ENCODE measurements at regions of chr1 and their contacts with region 1.

Region 1: GRCh38 chr1:240189386-240189989 is 97.8 kb downstream of the FMN2 start:
- H3K4me3 ChIP-seq: no peak overlapping the region
- H3K27ac ChIP-seq: no peak overlapping the region
- H3K4me1 ChIP-seq: peaks cover 4% of the 10 kb centered on the region; the same call in 1 of the 2 replicates
- CTCF ChIP-seq: peak; percentile 61

Region 2: GRCh38 chr1:239951511-239952140 is 237.9 kb before region 1 on chr1:
- CTCF ChIA-PET with region 1: interaction called, 11 read pairs
- POLR2A ChIA-PET with region 1: no interaction called
- H3K4me3 ChIP-seq: no peak overlapping the region
- H3K27ac ChIP-seq: no peak overlapping the region
- H3K4me1 ChIP-seq: no peaks in the 10 kb centered on the region
- CTCF ChIP-seq: peak; percentile 64

Region 3: GRCh38 chr1:240027059-240027462 is 162.4 kb before region 1 on chr1:
- CTCF ChIA-PET with region 1: interaction called, 120 read pairs
- POLR2A ChIA-PET with region 1: no interaction called
- H3K4me3 ChIP-seq: no peak overlapping the region
- H3K27ac ChIP-seq: no peak overlapping the region
- H3K4me1 ChIP-seq: no peaks in the 10 kb centered on the region
- CTCF ChIP-seq: peak; percentile 78; the same call in 1 of the 2 replicates

Region 4: GRCh38 chr1:240169188-240169587 is 20.3 kb before region 1 on chr1:
- CTCF ChIA-PET with region 1: interaction called, 16 read pairs
- POLR2A ChIA-PET with region 1: no interaction called
- H3K4me3 ChIP-seq: no peak overlapping the region
- H3K27ac ChIP-seq: no peak overlapping the region
- H3K4me1 ChIP-seq: peaks cover 5% of the 10 kb centered on the region; the same call in 1 of the 2 replicates
- CTCF ChIP-seq: peak; percentile 39; the same call in 1 of the 2 replicates

Region 5: GRCh38 chr1:240608707-240609106 is 419.2 kb after region 1 on chr1:
- CTCF ChIA-PET with region 1: interaction called, 10 read pairs
- POLR2A ChIA-PET with region 1: no interaction called
- H3K4me3 ChIP-seq: no peak overlapping the region
- H3K27ac ChIP-seq: no peak overlapping the region
- H3K4me1 ChIP-seq: peaks cover 21% of the 10 kb centered on the region
- CTCF ChIP-seq: peak; percentile 47